ENCODE measurements at regions of chr6 and their contacts with region 1.

Region 1: GRCh38 chr6:28683944-28684538 is 158.4 kb downstream of the GPX5 start:
- DNase-seq: peak; percentile 76
- H3K4me3 ChIP-seq: peak overlapping the region; percentile 8
- H3K27ac ChIP-seq: no peak overlapping the region
- H3K4me1 ChIP-seq: peaks cover 9% of the 10 kb centered on the region
- H3K27me3 ChIP-seq: no peaks in the 10 kb centered on the region
- CTCF ChIP-seq: peak; percentile 70

Region 2: DNA sequence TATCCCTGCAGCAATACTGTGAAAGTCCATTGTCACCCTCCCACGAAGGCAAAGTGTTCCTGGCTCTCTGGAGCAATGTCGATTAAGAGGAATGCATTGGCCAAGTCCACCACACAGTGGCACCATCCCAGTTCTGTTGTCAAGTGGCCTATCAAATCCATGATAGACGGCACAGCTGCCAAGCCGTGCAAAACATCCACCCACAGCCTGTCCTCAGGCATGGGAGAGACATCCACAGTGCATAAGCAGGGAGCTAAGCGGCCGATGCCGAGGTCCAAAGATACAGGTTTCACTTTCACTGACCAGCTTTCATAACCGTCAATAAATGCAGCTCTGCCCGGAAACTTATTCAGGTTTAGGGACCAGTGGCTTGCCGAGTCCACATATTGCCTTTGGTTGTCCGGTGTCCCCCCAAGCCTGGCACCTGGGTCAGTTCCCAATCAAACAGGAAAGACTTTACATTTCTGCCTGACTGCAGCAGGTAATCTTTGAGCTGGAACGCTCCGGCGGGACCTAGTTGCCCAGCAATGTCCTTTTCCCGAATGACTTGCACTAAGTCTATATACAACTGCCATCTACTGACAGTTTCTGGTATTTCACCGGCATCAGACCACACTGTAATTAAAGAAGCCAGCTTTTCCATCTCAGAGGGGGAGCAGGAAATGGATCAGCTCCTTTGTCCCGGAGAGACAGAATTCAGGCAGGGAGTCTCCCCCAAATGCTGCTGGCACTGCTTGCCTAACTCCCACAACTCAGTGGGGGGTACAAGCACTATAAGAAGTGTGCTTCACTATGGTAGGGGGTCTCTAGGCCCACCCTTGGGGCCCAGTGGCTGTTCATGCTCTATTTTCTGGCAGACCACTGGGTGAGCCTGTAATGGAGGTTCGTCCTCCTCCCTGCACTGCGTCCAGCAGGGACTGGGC is 328.0 kb before region 1 on chr6:
- CTCF ChIA-PET with region 1: no interaction called
- POLR2A ChIA-PET with region 1: no interaction called
- intact Hi-C with region 1: loop called (anchors 5 kb)
- DNase-seq: peak; percentile 95
- H3K4me3 ChIP-seq: peak overlapping the region; percentile 58
- H3K27ac ChIP-seq: peak overlapping the region; percentile 48
- H3K4me1 ChIP-seq: peaks cover 8% of the 10 kb centered on the region
- H3K27me3 ChIP-seq: no peaks in the 10 kb centered on the region
- CTCF ChIP-seq: peak; percentile 70

Region 3: DNA sequence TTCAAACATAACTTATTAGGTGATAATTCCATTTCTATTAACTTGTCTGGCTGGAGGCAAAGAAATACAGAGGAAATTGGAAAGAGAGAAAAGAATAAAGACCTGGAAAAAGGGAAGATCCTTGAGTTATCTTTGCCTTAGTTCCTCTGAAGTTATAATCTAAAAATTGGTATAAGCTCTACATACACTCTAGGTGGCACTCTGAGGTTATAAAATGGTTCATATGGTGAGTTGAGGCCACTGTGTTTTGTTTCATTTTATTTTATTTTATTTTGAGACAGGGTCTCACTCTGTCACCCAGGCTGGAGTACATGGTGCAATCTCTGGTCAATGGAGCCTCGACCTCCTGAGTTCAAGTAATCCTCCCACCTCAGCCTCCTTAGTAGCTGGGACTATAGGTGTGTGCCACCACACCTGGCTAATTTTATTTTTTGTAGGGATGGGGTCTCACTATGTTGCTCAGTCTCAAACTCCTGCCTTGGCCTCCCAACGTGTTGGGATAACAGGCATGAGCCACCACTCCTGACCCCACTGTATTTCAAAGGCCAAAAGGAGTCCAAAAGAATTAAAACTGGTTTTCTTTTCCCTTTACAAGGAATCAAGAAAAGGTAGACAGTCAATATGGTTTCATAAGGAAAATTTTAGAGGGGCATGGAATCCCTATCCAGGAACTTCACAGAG is 187.8 kb before region 1 on chr6:
- CTCF ChIA-PET with region 1: no interaction called
- POLR2A ChIA-PET with region 1: no interaction called
- intact Hi-C with region 1: loop called (anchors 2 kb)
- DNase-seq: peak; percentile 33
- H3K4me3 ChIP-seq: no peak overlapping the region
- H3K27ac ChIP-seq: no peak overlapping the region
- H3K4me1 ChIP-seq: no peaks in the 10 kb centered on the region
- H3K27me3 ChIP-seq: no peaks in the 10 kb centered on the region
- CTCF ChIP-seq: peak; percentile 37; the same call in 1 of the 2 replicates

Region 4: GRCh38 chr6:28586962-28587745 is 96.9 kb before region 1 on chr6:
- CTCF ChIA-PET with region 1: no interaction called
- POLR2A ChIA-PET with region 1: no interaction called
- intact Hi-C with region 1: loop called (anchors 5 kb)
- DNase-seq: peak; percentile 69
- H3K4me3 ChIP-seq: peak overlapping the region; percentile 59
- H3K27ac ChIP-seq: peak overlapping the region; percentile 55
- H3K4me1 ChIP-seq: peaks cover 21% of the 10 kb centered on the region
- H3K27me3 ChIP-seq: no peaks in the 10 kb centered on the region
- CTCF ChIP-seq: no peak